ENCODE measurements at regions of chr2 and their contacts with region 1.

Region 1: GRCh38 chr2:231900486-231900942 is 25.7 kb downstream of the NPPC start:
- DNase-seq: peak; percentile 68 to 98 (median 87)
- ATAC-seq: peak; percentile 94 to 100 (median 98)
- H3K4me3 ChIP-seq: no peak overlapping the region
- H3K27ac ChIP-seq: no peak overlapping the region
- H3K4me1 ChIP-seq: no peaks in the 10 kb centered on the region
- H3K27me3 ChIP-seq: no peaks in the 10 kb centered on the region
- CTCF ChIP-seq: peak; percentile 79 to 81 (median 80)

Region 2: DNA sequence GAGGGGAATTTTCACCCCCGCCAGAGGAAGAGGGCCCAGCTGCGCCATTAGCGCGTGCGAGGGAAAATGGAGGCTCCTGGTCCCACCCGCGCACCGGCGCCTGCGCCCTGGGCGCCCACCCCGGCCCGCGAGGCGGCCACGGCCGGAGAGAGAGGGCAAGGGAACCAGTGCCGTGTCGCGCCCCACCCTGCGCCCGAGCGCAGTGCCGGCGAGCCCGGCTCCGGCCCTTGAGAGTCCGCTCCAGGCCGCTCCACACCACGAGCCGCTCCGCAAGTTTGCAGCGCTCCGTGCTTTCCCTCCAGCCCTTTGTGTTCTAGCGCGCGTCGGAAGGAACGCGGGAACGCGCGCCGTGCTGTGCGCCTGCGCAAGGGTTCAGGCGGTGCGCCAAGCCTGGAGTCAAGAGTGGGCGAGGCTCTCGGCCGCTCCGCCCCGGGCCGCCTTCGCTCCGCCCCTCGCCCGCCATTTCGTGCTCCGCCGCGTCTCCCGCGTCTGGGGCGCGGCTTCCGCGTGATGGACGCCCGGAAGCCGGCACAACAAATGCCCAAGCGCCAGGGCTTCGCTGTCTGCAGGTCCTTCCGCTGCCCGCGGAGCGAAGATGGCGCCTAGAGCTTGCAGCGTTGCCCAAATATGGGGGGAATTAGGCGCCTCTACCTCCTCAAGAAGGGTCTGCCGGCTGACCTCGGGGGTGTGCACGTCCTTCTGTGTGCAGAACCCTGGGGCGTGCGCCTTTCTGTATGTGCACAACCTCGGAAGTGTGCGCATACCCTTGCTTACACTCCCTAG is 238.3 kb before region 1 on chr2:
- intact Hi-C with region 1: no loop called
- DNase-seq: peak; percentile 94 to 100 (median 99)
- ATAC-seq: peak; percentile 73 to 83 (median 79)
- H3K4me3 ChIP-seq: peak overlapping the region; percentile 26 to 48 (median 32)
- H3K27ac ChIP-seq: peak overlapping the region; percentile 80 to 97 (median 93)
- H3K4me1 ChIP-seq: peaks cover 0 to 15% (median 11%) of the 10 kb centered on the region in 3 donors
- H3K27me3 ChIP-seq: no peaks in the 10 kb centered on the region
- CTCF ChIP-seq: no peak

Region 3: DNA sequence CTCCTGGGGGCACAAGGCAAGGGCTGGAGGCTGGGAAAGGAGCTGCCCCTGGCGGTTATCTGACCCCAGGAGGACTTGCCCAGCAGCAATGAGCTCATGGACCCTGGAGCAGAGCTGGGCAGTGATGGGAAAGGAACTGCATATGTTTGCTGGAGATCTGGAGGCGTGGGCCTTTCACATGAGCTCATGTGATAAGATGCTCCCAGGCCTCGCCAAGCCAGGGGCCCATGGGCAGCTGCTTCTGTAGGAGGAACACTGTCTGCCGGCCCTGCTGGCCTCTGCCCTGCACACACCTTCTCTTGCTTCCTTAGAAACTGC is 34.7 kb after region 1 on chr2:
- intact Hi-C with region 1: no loop called
- DNase-seq: no peak
- ATAC-seq: no peak
- H3K4me3 ChIP-seq: no peak overlapping the region
- H3K27ac ChIP-seq: no peak overlapping the region
- H3K4me1 ChIP-seq: no peaks in the 10 kb centered on the region
- H3K27me3 ChIP-seq: no peaks in the 10 kb centered on the region
- CTCF ChIP-seq: no peak

Region 4: DNA sequence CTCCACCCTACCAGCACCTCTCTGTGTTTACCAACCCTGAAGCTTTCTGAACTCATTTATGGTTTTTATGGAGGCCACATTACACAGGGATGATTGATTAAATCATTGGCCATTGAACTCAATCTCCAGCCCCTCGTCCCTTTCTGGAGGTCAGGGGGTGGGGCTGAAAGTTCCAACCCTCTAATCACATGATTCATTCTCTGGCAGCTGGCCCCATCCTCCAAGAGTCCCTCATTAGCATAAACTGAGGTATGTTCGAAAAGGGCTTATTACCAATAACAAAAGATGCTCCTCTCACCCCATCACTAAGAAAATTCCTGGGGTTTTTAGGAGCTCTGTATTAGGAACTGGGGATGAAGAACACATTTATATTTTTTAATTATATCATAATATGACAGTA is 153.3 kb after region 1 on chr2:
- intact Hi-C with region 1: no loop called
- DNase-seq: no peak
- ATAC-seq: no peak
- H3K4me3 ChIP-seq: no peak overlapping the region
- H3K27ac ChIP-seq: no peak overlapping the region
- H3K4me1 ChIP-seq: no peaks in the 10 kb centered on the region
- H3K27me3 ChIP-seq: no peaks in the 10 kb centered on the region
- CTCF ChIP-seq: no peak

Region 5: GRCh38 chr2:232327105-232328041 is 426.9 kb after region 1 on chr2:
- intact Hi-C with region 1: loop called in 1 of 3 experiments (anchors 10 kb)
- DNase-seq: peak; percentile 29 to 91 (median 74)
- ATAC-seq: peak; percentile 79 to 85 (median 82)
- H3K4me3 ChIP-seq: no peak overlapping the region
- H3K27ac ChIP-seq: no peak overlapping the region
- H3K4me1 ChIP-seq: no peaks in the 10 kb centered on the region
- H3K27me3 ChIP-seq: no peaks in the 10 kb centered on the region
- CTCF ChIP-seq: peak; percentile 49 to 68 (median 64)

Region 6: DNA sequence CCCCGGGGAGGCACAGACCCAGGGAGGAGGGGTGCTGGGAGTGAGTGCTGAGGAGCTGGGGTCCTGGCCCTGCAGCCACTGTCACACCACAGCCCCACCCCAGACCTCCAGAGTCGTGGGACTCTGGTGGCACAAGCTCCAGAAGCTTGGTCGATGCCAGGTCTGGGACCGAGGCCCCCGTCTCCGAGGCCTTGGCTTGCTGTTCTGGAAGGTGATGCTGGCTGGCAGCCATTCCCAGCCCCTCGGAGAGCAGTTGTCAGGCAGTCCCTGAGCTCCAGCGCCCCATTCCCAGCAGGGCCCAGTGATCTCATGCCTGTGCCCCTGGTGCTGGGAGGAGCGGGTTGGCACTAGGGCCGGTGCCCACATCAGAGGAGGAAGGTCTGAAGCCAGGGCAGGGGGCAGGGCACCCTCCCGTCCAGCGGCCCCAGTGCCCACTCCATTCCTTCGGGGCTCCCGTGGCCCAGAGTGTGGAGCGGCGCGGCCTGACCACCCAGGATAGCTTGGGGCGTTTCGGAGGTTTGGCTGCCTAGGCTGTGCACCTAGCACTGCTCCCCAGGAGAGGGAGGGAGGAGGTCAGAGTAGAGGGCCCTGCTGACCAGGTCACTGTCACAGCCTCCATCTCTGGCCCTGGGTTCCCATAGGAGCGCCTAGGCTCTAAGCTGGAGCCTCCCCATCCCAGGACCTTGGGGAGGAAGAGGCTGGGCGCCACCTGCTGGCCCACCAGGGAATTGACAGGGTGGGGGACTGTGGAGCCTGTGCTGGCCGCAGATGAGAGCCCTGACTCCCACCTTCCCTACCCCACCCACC is 538.6 kb after region 1 on chr2:
- intact Hi-C with region 1: loop called in 1 of 3 experiments (anchors 10 kb)
- DNase-seq: peak in 5 of 6 donors; percentile 22 to 70 (median 43)
- ATAC-seq: peak; percentile 74 to 83 (median 78)
- H3K4me3 ChIP-seq: no peak overlapping the region
- H3K27ac ChIP-seq: no peak overlapping the region
- H3K4me1 ChIP-seq: no peaks in the 10 kb centered on the region
- H3K27me3 ChIP-seq: no peaks in the 10 kb centered on the region
- CTCF ChIP-seq: peak; percentile 43 to 56 (median 46)

Region 7: DNA sequence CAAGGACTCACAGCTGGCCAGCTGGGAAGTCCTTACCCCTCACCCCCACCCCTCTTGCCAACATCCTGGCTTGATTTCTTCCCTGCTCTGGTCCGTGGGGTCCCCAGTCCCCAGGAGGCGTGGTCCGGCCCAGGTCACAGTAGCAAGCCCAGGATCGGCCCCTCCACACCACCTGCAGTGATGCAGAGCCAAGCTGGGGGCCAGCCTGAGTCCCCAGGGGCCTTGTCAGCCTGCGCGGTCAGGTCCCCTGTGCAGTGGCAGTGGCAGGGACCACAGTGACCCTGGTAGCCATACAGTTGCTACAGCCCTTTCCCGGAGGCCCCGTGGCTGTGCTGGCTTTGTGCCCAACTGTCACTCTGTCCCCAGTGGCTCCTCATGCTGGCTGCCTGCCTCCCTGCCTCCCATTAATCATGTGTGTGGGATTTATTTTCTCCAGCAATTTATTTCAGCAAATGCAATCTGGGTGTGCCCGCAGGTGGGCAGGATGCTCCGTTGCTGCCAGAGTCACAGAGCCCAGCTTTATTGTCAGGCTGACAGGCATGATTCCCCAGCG is 610.9 kb after region 1 on chr2:
- intact Hi-C with region 1: loop called in 1 of 3 experiments (anchors 10 kb)
- DNase-seq: peak in 3 of 6 donors; percentile 43 to 55 (median 45)
- ATAC-seq: peak in 3 of 4 donors; percentile 60 to 86 (median 68)
- H3K4me3 ChIP-seq: no peak overlapping the region
- H3K27ac ChIP-seq: no peak overlapping the region
- H3K4me1 ChIP-seq: no peaks in the 10 kb centered on the region
- H3K27me3 ChIP-seq: no peaks in the 10 kb centered on the region
- CTCF ChIP-seq: no peak